HEK293T (cell line): ENCODE measurements at regions of chr10 and their contacts with region 1.

Region 1: DNA sequence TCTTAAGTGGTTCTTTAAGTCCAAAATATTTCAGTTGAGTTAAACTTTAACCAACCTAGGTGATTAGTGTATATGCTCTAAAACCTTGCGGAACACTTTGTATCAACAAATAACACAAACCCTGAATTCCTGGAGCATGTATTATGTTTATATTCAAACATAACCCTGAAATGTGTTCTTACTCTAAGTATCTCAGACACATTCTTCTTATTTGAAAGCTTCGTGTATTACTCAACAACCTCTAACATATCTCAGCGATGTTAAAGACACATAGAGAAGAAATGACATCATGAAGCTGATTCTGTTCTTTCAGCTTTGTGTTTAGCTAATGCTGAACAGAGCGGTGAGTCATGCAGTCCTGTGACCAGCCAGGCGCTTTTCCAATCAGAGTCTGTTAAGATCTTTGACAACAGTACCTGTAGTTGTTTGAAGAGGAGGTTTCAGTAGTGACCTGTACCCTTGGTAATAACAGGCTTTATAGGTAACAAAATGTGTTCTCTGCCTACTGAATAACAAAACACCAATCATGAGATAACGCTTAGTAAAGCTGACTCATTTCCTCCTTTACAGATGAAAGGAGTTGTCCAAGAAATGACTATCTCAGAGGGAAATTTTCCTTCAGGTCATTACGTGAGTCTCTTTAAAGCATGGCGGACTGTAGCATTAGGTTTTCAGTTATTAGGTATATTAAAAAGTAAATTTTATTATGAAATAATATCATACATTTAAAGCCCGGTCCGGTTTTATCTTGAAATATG is 67.3 kb upstream of the KLF6 start:
- DNase-seq: peak; percentile 41

Region 2: GRCh38 chr10:3776796-3777571 is 75.3 kb before region 1 on chr10:
- CTCF ChIA-PET with region 1: no interaction called
- POLR2A ChIA-PET with region 1: interaction called, 123 read pairs
- DNase-seq: no peak

Region 3: DNA sequence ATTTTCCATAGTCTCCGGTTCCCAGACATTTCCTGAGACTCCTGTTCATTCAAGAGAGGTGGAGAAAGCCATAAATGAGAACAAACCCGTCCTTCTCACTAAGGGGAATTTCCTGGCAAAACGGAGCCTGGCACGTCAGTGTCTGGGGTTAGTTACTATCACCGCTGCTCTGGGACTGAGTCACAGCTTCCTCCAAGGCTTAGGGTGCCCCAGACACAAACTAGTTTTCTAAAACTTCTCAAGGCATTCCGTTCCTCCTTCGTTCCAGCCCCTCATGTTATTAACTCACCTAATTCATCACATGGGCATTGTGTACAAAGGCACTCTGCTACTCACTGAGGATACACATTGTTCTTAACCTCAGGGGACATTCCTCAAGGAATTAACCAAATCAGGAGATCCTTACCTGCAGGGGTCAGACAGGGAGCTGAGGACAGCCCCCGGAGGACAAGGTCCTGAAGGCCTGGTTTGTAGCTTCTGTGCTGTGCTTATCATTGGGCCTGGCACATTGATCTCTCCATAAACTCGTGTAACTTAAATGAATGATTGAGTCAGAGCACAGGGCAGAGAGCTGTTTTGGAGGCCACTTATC is 35.7 kb after region 1 on chr10:
- CTCF ChIA-PET with region 1: no interaction called
- POLR2A ChIA-PET with region 1: interaction called, 13 read pairs
- DNase-seq: no peak